ENCODE measurements at regions of chr11 and their contacts with region 1.

Region 1: GRCh38 chr11:64269380-64270234 is 14.9 kb downstream of the BAD start:
- DNase-seq: peak; percentile 75 to 99 (median 83)
- ATAC-seq: peak; percentile 84
- H3K4me3 ChIP-seq: peak overlapping the region; percentile 60
- H3K27ac ChIP-seq: peak overlapping the region; percentile 96
- H3K4me1 ChIP-seq: peaks cover 32 to 54% of the 10 kb centered on the region in 2 experiments
- H3K27me3 ChIP-seq: no peaks in the 10 kb centered on the region
- CTCF ChIP-seq: peak; percentile 16 to 48 (median 37); a peak in 4 of 6 replicates
- EP300 ChIP-seq: peak; percentile 26; the same call in 1 of the 2 replicates
- POLR2A ChIP-seq: peak; percentile 77
- RAD21 ChIP-seq: peak; percentile 19 to 21; a peak in 2 of 4 replicates

Region 2: GRCh38 chr11:64246871-64247728 is 22.5 kb before region 1 on chr11 and contains the start of gene PPP1R14B:
- CTCF ChIA-PET with region 1: no interaction called
- POLR2A ChIA-PET with region 1: interaction called, 58 read pairs
- in situ Hi-C with region 1: no loop called
- intact Hi-C with region 1: loop called (anchors 2 kb)
- DNase-seq: peak; percentile 72 to 93 (median 84)
- ATAC-seq: peak; percentile 78
- H3K4me3 ChIP-seq: peak within 1 kb of the TSS; percentile 98
- H3K27ac ChIP-seq: peak within 1 kb of the TSS; percentile 98
- H3K4me1 ChIP-seq: peaks cover 42 to 92% of the 10 kb centered on the region in 2 experiments
- H3K27me3 ChIP-seq: no peaks in the 10 kb centered on the region
- CTCF ChIP-seq: peak; percentile 15 to 29 (median 26); a peak in 3 of 6 replicates
- EP300 ChIP-seq: peak; percentile 24
- POLR2A ChIP-seq: peak; percentile 90
- RAD21 ChIP-seq: no peak
- polyA plus RNA-seq, gene PPP1R14B: 7.7 to 17.5 TPM

Region 3: GRCh38 chr11:64258946-64259532 is 10.6 kb before region 1 on chr11:
- CTCF ChIA-PET with region 1: no interaction called
- POLR2A ChIA-PET with region 1: interaction called, 43 read pairs
- in situ Hi-C with region 1: no loop called
- intact Hi-C with region 1: no loop called
- DNase-seq: no peak
- ATAC-seq: peak; percentile 37; the same call in 2 of the 3 replicates
- H3K4me3 ChIP-seq: no peak overlapping the region
- H3K27ac ChIP-seq: no peak overlapping the region
- H3K4me1 ChIP-seq: peaks cover 0 to 57% of the 10 kb centered on the region in 2 experiments; a peak in 2 of 5 replicates
- H3K27me3 ChIP-seq: no peaks in the 10 kb centered on the region
- CTCF ChIP-seq: no peak
- EP300 ChIP-seq: no peak
- POLR2A ChIP-seq: no peak
- RAD21 ChIP-seq: no peak

Region 4: DNA sequence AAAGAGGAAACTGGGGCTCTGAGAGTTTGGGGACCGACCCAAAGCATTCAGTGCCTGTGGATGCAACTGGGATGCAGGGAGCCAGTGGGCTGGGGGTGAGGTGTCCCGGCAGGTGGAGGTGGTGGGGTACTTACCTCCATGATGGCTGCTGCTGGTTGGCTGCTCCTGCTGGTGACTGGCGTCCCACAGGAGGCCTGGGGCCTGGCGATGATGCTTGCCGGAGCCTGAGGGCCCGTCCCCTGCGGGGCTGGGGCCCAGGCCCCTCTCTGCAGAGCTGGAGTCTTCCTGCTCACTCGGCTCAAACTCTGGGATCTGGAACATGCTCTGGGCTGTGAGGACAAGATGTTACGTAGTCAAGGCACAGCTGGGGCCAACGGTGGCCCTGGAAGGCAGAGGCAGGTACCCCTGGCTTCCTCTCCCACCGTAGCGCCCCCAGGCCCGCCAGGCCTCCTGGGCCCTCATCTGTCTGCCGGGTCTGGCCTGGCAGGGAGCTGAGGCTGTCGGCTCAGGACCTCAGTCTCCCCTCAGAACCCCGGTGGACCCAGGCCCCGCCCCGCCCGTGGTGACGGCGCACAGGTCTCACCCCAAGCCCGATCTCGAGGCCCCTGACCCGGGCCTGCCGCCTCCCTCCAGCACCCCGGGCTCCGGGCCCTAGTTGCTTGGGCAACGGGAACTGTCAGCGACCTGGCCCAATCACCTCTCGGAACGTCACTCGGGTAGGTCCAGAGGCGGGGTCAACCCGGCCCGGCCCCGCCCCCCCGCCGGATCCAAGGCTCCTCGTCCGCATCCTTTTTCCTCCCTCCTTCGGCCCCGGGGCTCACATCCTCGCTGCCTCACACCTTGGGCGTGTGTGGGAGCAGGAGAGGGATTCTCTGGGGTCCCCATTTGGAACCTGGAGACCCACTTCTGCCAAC is 14.7 kb after region 1 on chr11 and contains the start of gene BAD:
- CTCF ChIA-PET with region 1: interaction called, 3 read pairs
- POLR2A ChIA-PET with region 1: interaction called, 54 read pairs
- in situ Hi-C with region 1: no loop called
- intact Hi-C with region 1: no loop called
- DNase-seq: peak; percentile 97 to 99 (median 98)
- ATAC-seq: peak; percentile 96
- H3K4me3 ChIP-seq: peak within 1 kb of the TSS; percentile 91
- H3K27ac ChIP-seq: peak within 1 kb of the TSS; percentile 79
- H3K4me1 ChIP-seq: peaks cover 7 to 43% of the 10 kb centered on the region in 2 experiments; a peak in 4 of 5 replicates
- H3K27me3 ChIP-seq: no peaks in the 10 kb centered on the region
- CTCF ChIP-seq: no peak; a peak in 1 of 6 replicates
- EP300 ChIP-seq: 0 out of 2 replicates have a peak, but pooled peaks have one; percentile 15
- POLR2A ChIP-seq: peak; percentile 78
- RAD21 ChIP-seq: no peak
- polyA plus RNA-seq, gene BAD: 0.61 to 4.0 TPM

Region 5: DNA sequence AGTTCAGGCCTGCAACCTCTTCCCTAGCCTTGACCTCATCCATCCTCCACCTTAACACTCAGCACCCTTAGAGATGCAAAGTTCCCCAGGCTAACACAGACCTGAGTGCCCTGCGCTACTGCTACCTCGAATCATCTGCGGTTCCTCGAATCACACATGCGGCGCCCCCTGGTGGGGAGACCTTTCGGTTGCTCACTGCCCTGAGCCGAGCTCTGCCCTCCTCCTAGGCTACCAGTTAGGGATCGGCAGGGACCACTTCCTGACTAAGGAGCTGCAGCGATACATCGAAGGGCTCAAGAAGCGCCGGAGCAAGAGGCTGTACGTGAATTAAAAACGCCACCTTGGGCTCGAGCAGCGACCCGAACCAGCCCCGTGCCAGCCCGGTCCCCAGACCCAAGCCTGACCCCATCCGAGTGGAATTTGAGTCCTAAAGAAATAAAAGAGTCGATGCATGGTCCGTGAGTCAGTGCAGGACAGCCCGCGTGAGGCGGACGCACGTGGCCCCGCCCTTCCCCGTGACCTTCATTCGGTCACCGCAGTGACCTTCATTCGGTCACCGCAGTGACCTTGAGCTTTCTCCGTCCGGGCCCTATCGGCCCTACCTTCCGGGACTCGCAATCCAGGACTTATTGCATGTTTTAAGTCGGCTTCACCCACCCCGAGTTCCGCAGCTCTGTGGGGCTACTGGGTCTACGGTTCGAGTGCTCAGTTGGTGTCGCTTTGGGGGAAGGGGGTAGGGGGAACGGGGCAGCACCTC is 34.9 kb after region 1 on chr11:
- CTCF ChIA-PET with region 1: interaction called, 3 read pairs
- POLR2A ChIA-PET with region 1: interaction called, 54 read pairs
- in situ Hi-C with region 1: no loop called
- intact Hi-C with region 1: loop called (anchors 2 kb)
- DNase-seq: peak; percentile 64 to 95 (median 76)
- ATAC-seq: peak; percentile 69
- H3K4me3 ChIP-seq: peak overlapping the region; percentile 72
- H3K27ac ChIP-seq: peak overlapping the region; percentile 100
- H3K4me1 ChIP-seq: peaks cover 32 to 53% of the 10 kb centered on the region in 2 experiments
- H3K27me3 ChIP-seq: no peaks in the 10 kb centered on the region
- CTCF ChIP-seq: peak; percentile 84 to 94 (median 87)
- EP300 ChIP-seq: peak; percentile 19
- POLR2A ChIP-seq: peak; percentile 77
- RAD21 ChIP-seq: peak; percentile 60 to 65

Measured in K562 (cell line).